ENCODE measurements at regions of chr1 and their contacts with region 1.

Region 1: DNA sequence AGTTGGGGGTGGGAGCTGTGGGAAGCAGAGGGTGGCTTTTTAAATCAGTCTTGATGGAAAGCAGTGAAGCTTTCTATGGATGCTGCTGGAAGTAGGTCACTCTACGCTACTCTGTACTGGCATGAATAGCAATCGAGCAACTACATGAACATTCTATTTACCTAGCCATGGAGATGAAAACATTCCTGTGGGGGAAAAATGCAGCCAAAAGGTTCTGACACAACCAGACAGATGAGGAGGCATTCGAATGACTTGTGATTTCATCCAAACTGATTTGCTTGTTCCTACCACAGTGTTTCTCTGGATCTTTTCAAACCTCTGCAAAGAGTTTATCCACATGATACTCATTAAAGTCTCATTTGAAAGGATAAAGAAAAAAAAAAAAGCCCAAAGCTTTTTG is 95.0 kb downstream of the ASTN1 start:
- DNase-seq: no peak
- H3K4me3 Mint-ChIP-seq: no peak overlapping the region
- H3K27ac Mint-ChIP-seq: no peak overlapping the region
- H3K4me1 Mint-ChIP-seq: no peaks in the 10 kb centered on the region
- H3K27me3 Mint-ChIP-seq: no peaks in the 10 kb centered on the region
- CTCF ChIP-seq: no peak

Region 2: DNA sequence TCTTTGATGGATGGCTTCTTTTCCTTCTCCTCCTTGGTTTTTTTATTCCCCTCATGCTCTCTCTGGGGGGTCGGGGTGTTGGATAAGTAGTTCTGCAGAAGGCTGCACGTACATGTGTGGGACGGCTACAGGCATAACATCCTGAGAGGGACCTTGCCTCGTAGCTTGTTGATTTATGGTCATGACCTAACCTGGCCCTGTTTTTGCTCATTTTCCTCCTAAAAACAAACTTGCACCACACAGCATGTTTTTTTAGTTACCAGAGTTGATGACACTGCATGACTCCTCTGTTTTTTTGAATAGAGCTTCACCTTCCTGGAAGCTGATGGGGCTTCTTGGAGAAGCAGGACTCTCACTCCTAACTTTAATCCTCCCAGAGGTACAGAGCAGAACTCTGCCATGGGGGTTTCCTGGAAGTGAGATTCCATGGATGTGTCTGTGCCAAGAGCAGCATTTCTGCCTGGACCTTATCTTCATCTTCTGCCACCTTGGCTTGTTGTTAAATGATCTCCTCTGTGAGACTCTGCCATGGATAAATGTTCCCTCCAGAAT is 491.8 kb before region 1 on chr1:
- CTCF ChIA-PET with region 1: no interaction called
- POLR2A ChIA-PET with region 1: no interaction called
- intact Hi-C with region 1: loop called (anchors 10 kb)
- DNase-seq: no peak
- H3K4me3 Mint-ChIP-seq: no peak overlapping the region
- H3K27ac Mint-ChIP-seq: no peak overlapping the region
- H3K4me1 Mint-ChIP-seq: no peaks in the 10 kb centered on the region
- H3K27me3 Mint-ChIP-seq: no peaks in the 10 kb centered on the region
- CTCF ChIP-seq: no peak

Region 3: DNA sequence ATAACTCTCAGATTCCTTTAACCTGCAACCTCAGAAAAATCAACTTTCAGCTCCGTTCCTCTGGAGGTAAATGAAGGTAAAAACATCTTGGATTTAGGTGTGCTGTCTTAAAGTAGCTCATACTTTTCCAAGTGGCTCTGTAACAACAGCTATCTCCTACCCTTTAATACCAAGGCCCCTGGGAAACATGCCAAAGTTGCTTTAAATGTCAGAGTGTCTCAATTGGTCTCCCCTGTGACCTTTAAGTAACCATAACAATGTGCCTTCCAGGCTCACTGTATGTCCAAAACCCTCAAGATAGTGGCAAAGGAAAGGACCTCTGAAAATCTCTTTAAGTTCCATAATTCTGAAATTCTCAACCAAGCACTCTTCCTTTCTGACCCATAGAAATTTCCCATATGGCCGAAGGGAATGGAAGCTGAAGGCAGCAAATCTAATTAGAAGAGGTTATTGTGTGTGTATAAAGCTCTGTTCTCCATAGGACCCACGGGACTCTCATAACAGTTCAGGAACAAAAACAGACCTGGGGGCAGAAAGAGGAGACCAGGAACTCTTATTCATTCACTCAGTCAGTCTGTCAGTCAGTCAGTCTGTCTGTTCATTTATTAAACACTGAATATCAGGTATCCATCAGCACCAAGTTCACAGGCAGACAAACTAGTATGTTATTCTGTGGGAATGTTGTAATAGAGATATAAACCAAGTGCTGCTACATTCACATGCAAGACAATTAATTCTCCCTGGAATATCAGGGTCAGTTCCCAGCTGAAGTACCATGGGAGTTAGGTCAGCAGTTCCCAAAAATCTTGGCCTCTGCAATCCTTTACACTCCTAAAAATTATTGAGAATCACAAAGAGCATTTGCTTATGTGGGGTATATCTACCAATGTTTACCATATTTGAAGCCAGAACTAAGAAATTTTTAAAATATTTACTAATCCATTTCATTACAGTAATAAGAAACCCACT is 75.9 kb after region 1 on chr1:
- CTCF ChIA-PET with region 1: no interaction called
- POLR2A ChIA-PET with region 1: no interaction called
- intact Hi-C with region 1: no loop called
- DNase-seq: peak; percentile 33
- H3K4me3 Mint-ChIP-seq: no peak overlapping the region
- H3K27ac Mint-ChIP-seq: no peak overlapping the region
- H3K4me1 Mint-ChIP-seq: no peaks in the 10 kb centered on the region
- H3K27me3 Mint-ChIP-seq: peaks cover 12% of the 10 kb centered on the region
- CTCF ChIP-seq: no peak

Region 4: DNA sequence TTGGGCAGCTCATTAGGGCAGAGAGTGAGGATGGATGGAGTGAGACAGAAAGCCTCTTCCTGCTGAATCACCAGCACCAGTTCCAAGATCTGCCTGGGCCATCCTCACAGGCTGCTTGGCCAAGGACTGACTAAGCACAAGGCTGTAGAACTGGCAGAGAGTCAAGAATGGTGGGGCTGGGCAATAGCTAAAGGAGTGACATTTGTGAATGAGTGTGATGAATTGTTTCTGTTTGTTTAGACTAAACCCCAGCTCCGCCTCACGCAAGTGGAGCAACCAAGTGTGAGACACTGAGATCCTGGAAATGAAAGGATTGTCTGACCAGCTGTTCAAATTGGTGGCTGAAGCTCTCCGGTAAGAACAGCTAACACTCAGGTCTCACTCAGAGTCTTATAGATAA is 139.9 kb after region 1 on chr1:
- CTCF ChIA-PET with region 1: no interaction called
- POLR2A ChIA-PET with region 1: no interaction called
- intact Hi-C with region 1: no loop called
- DNase-seq: peak; percentile 100
- H3K4me3 Mint-ChIP-seq: peak overlapping the region; percentile 10
- H3K27ac Mint-ChIP-seq: peak overlapping the region; percentile 52
- H3K4me1 Mint-ChIP-seq: peaks cover 20% of the 10 kb centered on the region
- H3K27me3 Mint-ChIP-seq: no peaks in the 10 kb centered on the region
- CTCF ChIP-seq: no peak

Region 5: GRCh38 chr1:177343445-177343844 is 274.0 kb after region 1 on chr1:
- CTCF ChIA-PET with region 1: no interaction called
- POLR2A ChIA-PET with region 1: no interaction called
- intact Hi-C with region 1: no loop called
- DNase-seq: no peak
- H3K4me3 Mint-ChIP-seq: no peak overlapping the region
- H3K27ac Mint-ChIP-seq: no peak overlapping the region
- H3K4me1 Mint-ChIP-seq: no peaks in the 10 kb centered on the region
- H3K27me3 Mint-ChIP-seq: peaks cover 27% of the 10 kb centered on the region
- CTCF ChIP-seq: no peak